CD8-positive, alpha-beta T cell (primary cell): ENCODE measurements at regions of chr2 and their contacts with region 1.

Region 1: DNA sequence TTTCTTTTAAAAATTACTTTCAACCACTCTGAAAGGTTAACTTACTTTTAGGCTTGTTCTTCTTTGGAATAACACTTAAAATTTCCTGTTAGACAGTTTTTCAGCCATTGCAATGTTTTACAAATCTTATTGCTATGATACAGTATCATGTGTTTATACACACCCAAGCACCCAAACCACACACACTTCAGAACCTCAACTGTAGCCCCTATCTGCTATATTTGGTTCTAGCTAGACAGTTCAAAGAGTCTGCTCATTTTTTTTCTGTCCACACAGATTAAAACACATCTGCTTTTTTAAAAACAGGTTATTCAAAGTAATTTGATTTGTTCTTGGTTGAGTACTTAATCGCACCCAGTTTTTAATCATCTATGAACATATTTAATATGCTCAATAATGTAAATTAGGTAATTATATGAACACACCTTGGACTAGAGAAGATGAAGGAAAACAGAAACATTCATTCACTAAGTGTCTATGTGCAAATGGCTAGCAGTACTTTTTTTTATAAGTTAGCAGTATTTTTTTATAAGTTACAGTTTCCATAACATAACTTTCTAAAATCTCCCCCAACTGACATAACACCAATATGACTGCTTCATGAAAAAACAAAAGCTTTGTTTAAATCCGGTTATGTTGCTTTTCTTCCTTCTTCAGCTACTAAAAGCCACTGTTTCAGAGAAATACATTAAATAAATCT is 17.6 kb downstream of the FBXO11 start:
- DNase-seq: peak in 6 of 9 experiments; percentile 7 to 87 (median 44)
- ATAC-seq: peak; percentile 94
- H3K4me3 ChIP-seq: no peak overlapping the region
- H3K4me3 Mint-ChIP-seq: peak overlapping the region; percentile 42
- H3K27ac ChIP-seq: peak overlapping the region; percentile 57 to 75
- H3K27ac Mint-ChIP-seq: peak overlapping the region; percentile 75
- H3K4me1 ChIP-seq: peaks cover 45% of the 10 kb centered on the region
- H3K4me1 Mint-ChIP-seq: peaks cover 72% of the 10 kb centered on the region
- H3K27me3 ChIP-seq: no peaks in the 10 kb centered on the region
- H3K27me3 Mint-ChIP-seq: no peaks in the 10 kb centered on the region
- CTCF ChIP-seq: no peak

Region 2: GRCh38 chr2:47867205-47867604 is 21.5 kb before region 1 on chr2:
- CTCF ChIA-PET with region 1: no interaction called
- POLR2A ChIA-PET with region 1: no interaction called
- intact Hi-C with region 1: loop called in 1 of 2 experiments (anchors 2 kb)
- DNase-seq: peak in 1 of 9 experiments; percentile 22
- ATAC-seq: no peak
- H3K4me3 ChIP-seq: no peak overlapping the region
- H3K4me3 Mint-ChIP-seq: no peak overlapping the region
- H3K27ac ChIP-seq: peak overlapping the region in 1 of 2 experiments; percentile 17
- H3K27ac Mint-ChIP-seq: peak overlapping the region; percentile 10
- H3K4me1 ChIP-seq: peaks cover 52% of the 10 kb centered on the region
- H3K4me1 Mint-ChIP-seq: peaks cover 91% of the 10 kb centered on the region
- H3K27me3 ChIP-seq: no peaks in the 10 kb centered on the region
- H3K27me3 Mint-ChIP-seq: no peaks in the 10 kb centered on the region
- CTCF ChIP-seq: no peak